ENCODE measurements at regions of chr9 and their contacts with region 1.

Region 1: GRCh38 chr9:37592108-37592951 is at the start of gene TOMM5:
- DNase-seq: peak; percentile 96
- ATAC-seq: peak; percentile 99
- total RNA-seq, gene TOMM5: 62.3 TPM

Region 2: DNA sequence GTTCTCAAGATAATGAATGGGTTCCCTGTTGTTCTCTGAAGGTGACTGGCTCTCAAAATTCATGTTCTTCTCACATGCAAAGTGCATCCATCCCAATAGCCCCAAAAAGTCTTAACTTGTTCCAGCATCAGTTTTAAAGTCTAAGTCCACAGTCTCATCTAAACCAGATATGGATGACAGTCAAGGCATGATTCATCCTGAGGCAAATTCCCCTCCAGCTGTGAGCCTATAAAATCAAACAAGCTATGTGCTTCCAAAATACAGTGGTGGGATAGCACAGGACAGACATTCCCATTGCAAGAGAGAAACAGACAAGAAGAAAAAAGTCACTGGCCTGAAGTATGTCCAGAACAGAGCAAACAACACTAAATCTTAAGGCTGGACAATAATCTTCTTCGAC is 41.5 kb before region 1 on chr9:
- intact Hi-C with region 1: no loop called
- DNase-seq: no peak
- ATAC-seq: no peak

Region 3: DNA sequence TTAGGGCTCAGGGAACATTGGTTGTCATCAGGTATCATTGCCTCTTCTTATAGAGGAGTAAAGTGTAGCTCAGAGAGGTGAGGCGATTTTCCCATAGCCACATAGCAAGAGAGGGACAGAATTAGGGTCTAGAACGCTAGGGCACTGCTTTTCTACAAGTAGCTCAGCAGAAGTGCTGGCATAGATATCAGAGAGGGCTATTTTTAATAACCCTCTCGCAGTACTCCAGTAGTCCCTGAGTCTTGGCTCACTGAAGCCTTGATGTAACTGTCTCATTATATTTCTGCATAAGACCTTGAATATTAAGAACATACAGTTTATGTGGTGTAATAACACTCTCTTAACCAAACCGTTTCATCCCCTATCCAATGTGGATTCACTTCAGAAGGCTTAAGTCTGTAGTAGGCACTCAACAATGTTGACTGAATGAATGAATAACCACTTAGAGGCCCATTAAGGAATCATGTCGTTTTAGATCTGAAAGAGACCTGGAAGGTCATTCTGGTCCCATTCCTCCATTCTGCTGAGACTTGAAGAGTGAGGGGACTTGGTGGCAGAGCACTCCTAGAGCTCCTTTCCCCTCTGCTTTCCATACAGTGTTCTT is 53.7 kb after region 1 on chr9:
- intact Hi-C with region 1: loop called (anchors 5 kb)
- DNase-seq: no peak
- ATAC-seq: peak; percentile 31

Region 4: GRCh38 chr9:37784616-37785483 is 192.5 kb after region 1 on chr9 and contains the start of gene EXOSC3:
- intact Hi-C with region 1: loop called (anchors 5 kb)
- DNase-seq: peak; percentile 95
- ATAC-seq: peak; percentile 96
- total RNA-seq, gene EXOSC3: 17.0 TPM

Measured in Right ventricle myocardium inferior (tissue), 1 donor.